Activated naive CD4-positive, alpha-beta T cell treated with anti-CD3 and anti-CD28 coated beads for 36 hours (primary cell): ENCODE measurements at regions of chr9 and their contacts with region 1.

Region 1: DNA sequence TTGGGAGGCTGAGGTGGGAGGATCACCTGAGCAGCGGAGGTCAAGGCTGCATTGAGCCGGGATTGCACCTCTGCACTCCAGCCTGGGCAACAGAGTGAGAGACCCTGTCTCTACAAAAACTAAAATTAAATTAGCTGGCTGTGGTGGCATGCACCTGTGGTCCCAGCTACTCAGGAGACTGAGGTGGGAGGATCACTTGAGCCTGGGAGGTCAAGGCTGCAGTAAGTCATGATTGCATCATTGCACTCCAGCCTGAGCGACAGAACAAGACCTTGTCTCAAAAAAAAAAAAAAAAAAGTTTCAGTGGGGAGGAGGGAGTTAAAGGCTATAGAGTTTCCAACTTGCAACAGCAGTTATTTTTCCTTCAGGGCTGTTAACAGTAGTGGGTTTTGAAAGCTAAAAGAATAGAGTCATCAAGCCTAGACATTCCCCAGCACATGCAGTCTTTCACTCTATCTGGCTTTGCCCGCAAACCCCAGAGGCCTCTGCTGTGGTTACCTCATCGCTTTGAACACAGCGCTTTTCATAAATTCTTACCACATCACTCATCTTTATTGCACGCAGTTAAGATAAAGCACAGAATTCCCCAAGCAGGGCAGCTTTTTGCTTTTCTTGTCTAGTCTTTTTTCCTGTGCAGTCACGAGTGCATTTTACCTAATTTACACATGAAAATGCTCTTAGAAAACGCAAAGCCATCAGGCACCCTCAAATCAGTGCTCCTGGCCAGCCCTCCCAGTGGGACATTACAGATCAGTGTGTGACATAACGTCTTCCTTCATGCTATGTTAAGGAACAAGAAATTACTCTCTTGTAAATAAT is 8.7 kb upstream of the SLC2A8 start:
- DNase-seq: peak; percentile 97
- H3K4me3 Mint-ChIP-seq: peak overlapping the region; percentile 31
- H3K27ac Mint-ChIP-seq: peak overlapping the region; percentile 84
- H3K4me1 Mint-ChIP-seq: peaks cover 33% of the 10 kb centered on the region
- H3K27me3 Mint-ChIP-seq: peaks cover 73% of the 10 kb centered on the region

Region 2: GRCh38 chr9:126722252-126723078 is 665.8 kb before region 1 on chr9:
- CTCF ChIA-PET with region 1: no interaction called
- intact Hi-C with region 1: loop called (anchors 5 kb)
- DNase-seq: peak; percentile 93
- H3K4me3 Mint-ChIP-seq: peak overlapping the region; percentile 84
- H3K27ac Mint-ChIP-seq: peak overlapping the region; percentile 82
- H3K4me1 Mint-ChIP-seq: peaks cover 35% of the 10 kb centered on the region
- H3K27me3 Mint-ChIP-seq: no peaks in the 10 kb centered on the region

Region 3: DNA sequence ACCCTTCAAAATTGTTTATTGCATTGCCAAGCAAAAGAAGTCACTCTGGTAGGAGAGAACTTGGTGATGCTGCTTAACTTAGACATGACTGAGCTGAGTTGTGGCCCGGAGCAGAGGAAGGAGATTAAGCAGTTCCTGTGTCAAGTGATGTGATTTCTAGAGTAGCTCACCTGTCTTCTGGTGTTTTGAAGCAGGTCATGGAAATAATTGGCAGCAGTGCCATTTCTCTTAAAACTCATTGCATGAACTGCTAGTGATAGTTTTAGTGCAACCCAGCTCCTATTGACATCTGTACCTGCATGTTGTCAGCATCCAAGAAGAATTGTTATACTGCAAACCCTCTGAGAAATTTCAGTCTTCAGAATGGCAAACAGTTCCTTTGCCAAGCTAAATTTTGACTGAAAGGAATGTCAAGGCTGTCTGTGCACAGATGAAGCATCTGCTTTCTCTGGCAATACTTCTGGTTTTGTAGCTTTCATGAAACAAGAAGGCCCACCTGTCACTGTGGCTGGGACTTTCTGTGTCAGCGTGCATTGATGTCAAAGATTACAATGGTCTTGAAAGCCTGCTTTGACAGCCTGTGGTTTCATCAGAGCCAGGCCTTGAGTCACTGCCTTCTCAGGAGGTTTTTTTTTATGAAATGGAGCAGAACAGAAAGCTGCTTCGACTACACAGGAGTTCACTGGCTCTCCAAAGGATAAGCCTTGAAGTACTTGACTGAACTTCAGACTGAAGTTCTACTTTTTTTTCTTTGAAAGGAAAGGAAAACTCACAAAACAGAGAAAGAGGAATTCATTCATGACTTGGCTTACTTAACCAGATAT is 383.1 kb before region 1 on chr9:
- CTCF ChIA-PET with region 1: no interaction called
- intact Hi-C with region 1: loop called (anchors 1 kb)
- DNase-seq: peak; percentile 91
- H3K4me3 Mint-ChIP-seq: no peak overlapping the region
- H3K27ac Mint-ChIP-seq: peak overlapping the region; percentile 76
- H3K4me1 Mint-ChIP-seq: peaks cover 21% of the 10 kb centered on the region
- H3K27me3 Mint-ChIP-seq: peaks cover 34% of the 10 kb centered on the region

Region 4: DNA sequence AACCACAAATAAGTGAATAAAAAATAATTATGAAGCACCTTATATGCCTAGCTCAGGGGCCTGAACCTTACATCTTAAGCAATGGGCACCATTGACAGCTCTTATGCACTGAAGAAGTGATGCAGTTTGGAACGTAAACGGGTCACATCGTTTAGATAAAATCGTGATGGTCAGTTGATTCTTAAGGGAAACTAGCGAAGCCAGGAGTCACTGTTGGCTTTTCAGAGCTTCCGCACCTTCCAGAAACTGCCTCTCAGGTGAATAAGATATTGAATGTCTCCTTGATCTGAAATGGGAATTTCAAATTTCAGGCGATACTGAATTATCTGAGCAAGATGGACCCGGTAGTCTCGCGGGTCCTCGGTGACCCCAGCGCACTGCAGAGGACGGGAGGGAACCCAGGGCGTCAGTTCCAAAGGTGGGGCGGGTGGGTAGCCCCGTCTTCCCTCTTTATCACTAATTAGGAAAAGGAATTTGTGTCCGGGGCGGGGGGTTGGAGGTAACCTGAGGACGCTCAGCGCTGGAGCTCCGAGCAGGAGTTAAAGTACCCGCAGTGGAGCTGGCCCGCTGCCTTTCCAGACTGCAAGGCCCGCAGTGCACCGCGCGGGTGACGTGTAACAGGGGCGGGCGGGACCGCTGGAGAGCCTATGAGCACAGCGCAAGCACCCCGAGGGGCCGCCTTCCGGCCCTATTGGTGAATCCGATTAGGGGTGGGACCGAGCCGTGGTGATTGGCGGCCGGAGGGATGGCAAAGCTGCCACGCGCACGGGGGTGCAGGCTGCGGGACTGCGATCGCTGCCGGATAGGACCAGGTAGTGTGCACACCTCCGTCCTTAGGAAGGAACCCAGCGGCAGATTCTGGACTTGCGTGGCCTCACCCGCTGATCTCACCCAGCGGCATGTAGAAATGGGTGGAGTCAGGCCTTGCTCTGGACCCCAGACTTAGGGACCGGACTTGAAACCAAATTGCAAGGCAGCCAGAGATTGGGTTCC is 143.3 kb before region 1 on chr9:
- CTCF ChIA-PET with region 1: no interaction called
- intact Hi-C with region 1: loop called (anchors 1 kb)
- DNase-seq: peak; percentile 98
- H3K4me3 Mint-ChIP-seq: peak overlapping the region; percentile 83
- H3K27ac Mint-ChIP-seq: no peak overlapping the region
- H3K4me1 Mint-ChIP-seq: peaks cover 5% of the 10 kb centered on the region
- H3K27me3 Mint-ChIP-seq: no peaks in the 10 kb centered on the region

Region 5: GRCh38 chr9:127316586-127317323 is 71.5 kb before region 1 on chr9:
- CTCF ChIA-PET with region 1: interaction called, 6 read pairs
- intact Hi-C with region 1: loop called (anchors 1 kb)
- DNase-seq: peak; percentile 55
- H3K4me3 Mint-ChIP-seq: no peak overlapping the region
- H3K27ac Mint-ChIP-seq: no peak overlapping the region
- H3K4me1 Mint-ChIP-seq: peaks cover 18% of the 10 kb centered on the region
- H3K27me3 Mint-ChIP-seq: peaks cover 14% of the 10 kb centered on the region

Region 6: GRCh38 chr9:127450830-127451724 is 62.8 kb after region 1 on chr9 and contains the starts of genes LRSAM1 and RPL12:
- CTCF ChIA-PET with region 1: no interaction called
- intact Hi-C with region 1: loop called (anchors 2 kb)
- DNase-seq: peak; percentile 97
- H3K4me3 Mint-ChIP-seq: peak within 1 kb of the TSS; percentile 89
- H3K27ac Mint-ChIP-seq: peak within 1 kb of the TSS; percentile 95
- H3K4me1 Mint-ChIP-seq: peaks cover 42% of the 10 kb centered on the region
- H3K27me3 Mint-ChIP-seq: no peaks in the 10 kb centered on the region
- total RNA-seq, gene LRSAM1: 8.8 to 9.9 TPM
- total RNA-seq, gene RPL12: 3,038 to 3,119 TPM